ENCODE measurements at regions of chr14 and their contacts with region 1.

Region 1: GRCh38 chr14:68104518-68104917 is 284.9 kb downstream of the RAD51B start:
- DNase-seq: no peak
- H3K4me3 ChIP-seq: no peak overlapping the region
- H3K27ac ChIP-seq: peak overlapping the region; percentile 17 to 21
- H3K4me1 ChIP-seq: no peaks in the 10 kb centered on the region
- H3K27me3 ChIP-seq: no peaks in the 10 kb centered on the region
- CTCF ChIP-seq: no peak
- POLR2A ChIP-seq: no peak

Region 2: DNA sequence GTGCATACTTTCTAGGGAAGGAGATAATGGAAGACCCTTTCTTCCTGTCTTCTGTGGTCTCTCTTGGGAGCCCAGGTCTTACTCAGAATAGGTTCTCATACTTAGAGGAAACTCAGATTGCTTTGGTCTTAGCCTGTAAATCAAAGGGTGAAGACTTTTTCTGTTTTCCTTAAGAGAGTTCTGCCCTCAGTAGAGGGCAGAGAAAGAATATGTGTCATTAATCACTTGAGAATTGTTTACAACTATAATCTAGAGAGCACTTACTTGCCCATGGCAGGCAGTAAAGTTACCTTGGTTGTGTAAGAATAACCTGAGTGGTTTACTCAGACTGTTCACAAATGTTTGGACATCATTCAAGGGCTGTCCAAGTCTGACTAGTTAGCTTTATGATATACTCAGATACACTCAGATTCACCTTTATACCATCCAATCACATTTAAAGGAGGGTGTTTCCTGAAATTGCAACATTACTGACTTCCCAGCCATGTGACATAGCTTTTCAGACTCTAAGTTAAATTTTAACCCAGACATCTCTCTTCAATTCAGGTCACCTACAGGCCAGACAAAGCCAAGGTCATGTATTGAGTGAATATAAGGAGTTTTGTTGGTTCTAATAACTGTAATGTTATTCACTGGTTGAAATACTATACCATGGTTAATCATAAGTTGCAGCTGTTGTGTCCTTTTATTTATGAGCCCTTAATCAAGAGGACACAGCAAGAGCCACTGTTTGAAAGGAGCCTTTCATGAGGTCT is 87.2 kb after region 1 on chr14:
- intact Hi-C with region 1: loop called (anchors 5 kb)
- DNase-seq: peak; percentile 71
- H3K4me3 ChIP-seq: no peak overlapping the region
- H3K27ac ChIP-seq: peak overlapping the region; percentile 39 to 40
- H3K4me1 ChIP-seq: no peaks in the 10 kb centered on the region
- H3K27me3 ChIP-seq: no peaks in the 10 kb centered on the region
- CTCF ChIP-seq: peak in 2 of 4 experiments; percentile 21 to 33
- POLR2A ChIP-seq: no peak

Region 3: GRCh38 chr14:68535404-68536017 is 431.0 kb after region 1 on chr14:
- intact Hi-C with region 1: no loop called
- DNase-seq: no peak
- H3K4me3 ChIP-seq: no peak overlapping the region
- H3K27ac ChIP-seq: no peak overlapping the region
- H3K4me1 ChIP-seq: no peaks in the 10 kb centered on the region
- H3K27me3 ChIP-seq: no peaks in the 10 kb centered on the region
- CTCF ChIP-seq: no peak
- POLR2A ChIP-seq: no peak

Measured in prostate gland (tissue), 2 donors.